Psoas muscle (tissue), 8 donors: ENCODE measurements at regions of chr1 and their contacts with region 1.

Region 1: GRCh38 chr1:240987928-240988327 is 369.1 kb downstream of the RGS7 start:
- DNase-seq: no peak
- ATAC-seq: no peak
- H3K4me3 ChIP-seq: no peak overlapping the region
- H3K27ac ChIP-seq: no peak overlapping the region
- H3K4me1 ChIP-seq: no peaks in the 10 kb centered on the region
- H3K27me3 ChIP-seq: no peaks in the 10 kb centered on the region
- CTCF ChIP-seq: no peak

Region 2: GRCh38 chr1:240968864-240969263 is 19.1 kb before region 1 on chr1:
- intact Hi-C with region 1: loop called in 1 of 2 experiments (anchors 2 kb)
- DNase-seq: no peak
- ATAC-seq: no peak
- H3K4me3 ChIP-seq: no peak overlapping the region
- H3K27ac ChIP-seq: no peak overlapping the region
- H3K4me1 ChIP-seq: no peaks in the 10 kb centered on the region
- H3K27me3 ChIP-seq: no peaks in the 10 kb centered on the region
- CTCF ChIP-seq: no peak